ENCODE measurements at regions of chr1 and their contacts with region 1.

Region 1: GRCh38 chr1:176559878-176560277 is 96.9 kb downstream of the PAPPA2 start:
- DNase-seq: peak; percentile 44 to 51
- H3K4me3 ChIP-seq: no peak overlapping the region
- H3K27ac ChIP-seq: no peak overlapping the region
- H3K4me1 ChIP-seq: no peaks in the 10 kb centered on the region
- H3K27me3 ChIP-seq: no peaks in the 10 kb centered on the region
- CTCF ChIP-seq: peak; percentile 50 to 87 (median 73)
- POLR2A ChIP-seq: no peak

Region 2: DNA sequence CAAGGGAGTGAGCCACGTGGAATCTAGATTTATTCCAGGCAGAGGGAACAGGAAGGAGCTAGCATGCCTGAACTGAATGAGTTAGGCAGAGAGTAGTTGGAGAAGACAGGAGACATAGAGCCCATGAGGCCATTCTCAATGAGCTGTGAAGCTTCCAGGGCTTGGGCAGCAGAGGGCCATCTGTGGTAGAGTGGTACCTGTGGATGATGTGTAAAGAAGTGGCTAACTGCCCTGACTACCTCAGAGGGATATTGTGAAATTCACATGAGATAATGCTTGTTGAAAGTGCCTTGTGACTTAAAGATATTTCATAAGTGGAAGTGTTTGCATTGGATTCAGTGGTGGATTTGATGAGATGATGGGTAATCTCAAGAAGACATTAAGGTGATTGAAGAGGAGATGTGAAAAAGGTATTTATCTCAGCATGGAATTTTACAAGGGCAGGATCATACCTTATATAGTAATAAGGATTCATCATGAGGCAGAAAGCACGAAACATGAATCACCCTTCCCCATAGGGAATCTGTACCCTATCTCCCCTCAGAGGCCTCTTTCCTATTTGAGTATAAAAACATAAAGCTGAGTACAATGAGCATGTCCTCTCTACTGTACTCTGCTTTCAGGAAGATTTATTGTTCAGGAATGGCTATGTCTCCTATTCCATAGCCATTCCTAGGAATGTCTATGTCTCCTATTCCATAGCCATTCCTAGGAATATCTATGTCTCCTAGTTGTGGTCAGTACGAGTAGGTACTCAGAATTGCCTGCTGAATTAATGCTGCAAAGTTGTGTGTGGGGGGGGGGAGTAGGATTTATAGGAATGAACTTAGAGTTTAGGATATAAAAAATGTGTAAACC is 49.9 kb after region 1 on chr1:
- intact Hi-C with region 1: no loop called
- DNase-seq: no peak
- H3K4me3 ChIP-seq: no peak overlapping the region
- H3K27ac ChIP-seq: no peak overlapping the region
- H3K4me1 ChIP-seq: no peaks in the 10 kb centered on the region
- H3K27me3 ChIP-seq: no peaks in the 10 kb centered on the region
- CTCF ChIP-seq: no peak
- POLR2A ChIP-seq: no peak

Region 3: DNA sequence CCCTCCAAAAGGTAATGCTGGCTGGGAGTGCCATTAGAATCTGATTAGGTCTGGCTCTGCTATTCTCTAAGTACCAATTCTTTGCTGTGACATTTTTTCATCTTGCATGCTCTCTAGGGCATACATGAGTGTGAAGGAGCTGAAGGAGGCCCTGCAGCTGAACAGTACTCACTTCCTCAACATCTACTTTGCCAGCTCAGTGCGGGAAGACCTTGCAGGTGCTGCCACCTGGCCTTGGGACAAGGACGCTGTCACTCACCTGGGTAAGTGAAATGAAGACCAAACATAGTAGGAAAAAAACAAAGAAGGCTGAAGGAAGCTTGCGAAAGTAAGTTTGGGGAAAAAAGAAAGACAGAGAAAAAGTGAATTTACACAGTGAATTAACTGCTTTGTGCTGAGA is 111.0 kb after region 1 on chr1:
- intact Hi-C with region 1: no loop called
- DNase-seq: no peak
- H3K4me3 ChIP-seq: no peak overlapping the region
- H3K27ac ChIP-seq: no peak overlapping the region
- H3K4me1 ChIP-seq: no peaks in the 10 kb centered on the region
- H3K27me3 ChIP-seq: no peaks in the 10 kb centered on the region
- CTCF ChIP-seq: no peak
- POLR2A ChIP-seq: no peak

Region 4: DNA sequence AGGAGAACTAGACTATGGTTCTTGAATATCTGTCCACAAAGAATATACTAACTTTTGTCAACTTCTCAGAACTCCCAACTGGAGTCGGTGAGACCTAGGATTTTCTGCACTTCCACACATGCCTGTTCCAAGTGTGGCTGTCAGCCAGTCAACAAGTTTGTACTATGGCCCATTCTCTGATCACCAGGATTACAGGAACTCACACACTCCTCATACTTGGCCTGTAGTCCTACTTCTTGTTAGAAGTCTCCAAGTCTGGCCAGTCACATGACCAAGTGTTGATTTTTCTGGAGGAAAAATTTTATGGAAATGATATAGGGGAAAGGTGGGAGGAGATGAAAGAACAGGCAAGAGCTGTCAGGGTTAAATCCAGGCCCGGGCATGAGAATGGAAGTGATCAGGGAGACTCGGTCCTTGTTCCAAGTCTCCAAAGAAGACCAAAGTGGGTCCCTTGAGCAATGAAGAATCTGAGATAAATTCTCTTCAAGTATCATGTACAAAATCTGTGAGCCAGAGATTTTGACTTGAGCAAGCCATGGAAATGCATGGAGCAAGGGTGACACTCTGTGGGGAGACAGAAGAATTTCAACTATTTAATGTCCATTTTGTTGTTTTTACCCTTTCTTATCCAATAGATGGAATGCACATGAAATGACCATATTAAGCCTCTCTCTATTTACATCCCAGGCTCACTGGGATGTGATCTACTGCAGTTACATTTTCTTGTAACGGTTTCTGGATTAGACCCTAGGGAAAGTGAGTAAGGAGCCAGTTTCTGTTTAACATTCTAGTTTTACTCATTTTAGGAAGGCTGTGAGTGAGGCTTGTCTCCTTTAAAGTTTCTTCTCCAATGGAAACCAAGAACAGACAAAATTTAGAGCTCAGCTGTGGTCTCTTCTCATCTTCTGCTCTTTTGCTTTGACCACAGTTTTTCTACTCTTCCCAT is 283.7 kb after region 1 on chr1:
- intact Hi-C with region 1: loop called (anchors 5 kb)
- DNase-seq: peak; percentile 16 to 46
- H3K4me3 ChIP-seq: no peak overlapping the region
- H3K27ac ChIP-seq: no peak overlapping the region
- H3K4me1 ChIP-seq: no peaks in the 10 kb centered on the region
- H3K27me3 ChIP-seq: no peaks in the 10 kb centered on the region
- CTCF ChIP-seq: peak in 4 of 6 experiments; percentile 65 to 87 (median 77)
- POLR2A ChIP-seq: no peak

Measured in thyroid gland (tissue), 4 donors.